Endothelial cell of umbilical vein (primary cell): ENCODE measurements at regions of chr6 and their contacts with region 1.

Region 1: DNA sequence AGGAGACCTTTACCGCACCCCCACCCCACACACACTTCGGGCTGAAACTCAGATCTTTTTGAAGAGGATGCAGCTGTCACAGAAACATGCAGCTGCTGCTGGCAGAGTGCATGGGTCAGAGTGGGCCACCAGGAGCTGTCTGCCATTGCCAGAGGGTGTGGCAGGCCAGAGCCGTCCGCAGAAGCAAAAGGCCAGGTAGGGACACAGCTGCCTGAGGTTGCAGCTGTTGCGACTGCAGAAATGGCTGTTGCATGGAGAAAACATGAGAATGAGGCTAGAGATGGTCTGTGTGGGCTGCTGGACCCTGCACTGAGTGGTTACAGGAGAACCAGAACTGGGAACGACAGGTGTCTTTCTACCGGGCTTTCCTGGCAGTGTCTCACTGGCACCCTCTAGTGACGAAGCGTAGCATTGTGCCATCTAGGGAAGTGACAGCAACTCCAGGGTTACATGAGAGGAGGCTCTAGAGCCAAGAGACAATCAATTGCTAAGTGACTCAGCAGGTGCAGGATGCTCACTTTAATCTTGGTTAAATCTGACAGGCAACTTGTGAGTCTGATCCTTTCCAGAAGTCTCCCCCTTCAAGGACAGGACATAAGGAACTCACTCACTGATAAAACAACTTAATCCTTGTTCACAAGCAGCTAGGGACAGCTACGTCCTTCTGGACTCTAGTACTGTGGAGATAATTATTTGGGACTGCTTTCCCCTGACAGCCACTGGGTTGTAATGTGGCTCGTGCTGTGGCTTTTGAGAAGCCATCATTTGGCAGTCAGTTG is 29.1 kb upstream of the SERPINB9 start:
- DNase-seq: peak; percentile 84
- H3K4me3 ChIP-seq: no peak overlapping the region
- H3K27ac ChIP-seq: no peak overlapping the region
- H3K4me1 ChIP-seq: peaks cover 2% of the 10 kb centered on the region
- H3K27me3 ChIP-seq: no peaks in the 10 kb centered on the region
- CTCF ChIP-seq: peak; percentile 93 to 96
- POLR2A ChIP-seq: no peak

Region 2: DNA sequence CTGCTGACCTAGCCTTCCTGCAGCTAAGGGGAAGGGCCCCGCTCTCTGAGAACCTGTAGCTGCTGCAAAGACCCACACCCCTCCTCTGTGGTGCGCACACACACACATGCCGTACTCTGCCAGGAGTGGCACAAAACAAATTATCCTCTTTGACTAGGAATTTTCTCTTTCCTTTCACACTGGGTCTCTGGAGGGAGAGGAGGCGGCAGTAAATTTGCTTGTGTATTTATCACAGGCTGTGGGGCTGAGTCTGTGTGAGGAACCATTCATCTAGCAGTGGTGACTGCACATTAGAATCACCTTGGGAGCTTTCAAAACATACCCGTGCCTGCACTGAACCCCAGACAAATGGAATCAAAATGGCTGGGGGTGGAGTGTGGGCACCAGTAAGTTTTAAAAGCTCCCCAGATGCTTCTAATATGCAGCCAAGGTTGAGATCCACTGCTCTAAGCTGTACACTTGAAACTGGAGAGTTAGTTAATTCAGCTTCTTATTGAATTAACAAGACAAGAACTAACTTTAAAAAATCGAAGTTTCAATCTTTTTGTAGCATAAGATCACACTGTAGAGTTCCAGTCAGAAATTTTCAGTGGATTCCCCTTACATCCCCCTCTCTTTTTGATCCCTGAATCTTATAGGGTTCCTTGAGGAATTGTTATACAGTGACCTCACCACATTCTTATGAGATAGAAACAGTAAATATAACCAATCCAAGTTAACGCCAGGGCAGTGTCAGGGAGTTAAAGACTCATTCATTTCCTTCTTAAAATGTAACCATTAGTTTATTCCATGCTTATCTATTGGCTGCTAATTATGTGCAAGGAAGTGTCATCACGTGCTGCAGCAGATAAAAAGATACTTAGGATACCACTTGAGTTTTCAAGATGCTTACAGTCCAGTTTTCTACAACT is 656.9 kb before region 1 on chr6:
- CTCF ChIA-PET with region 1: no interaction called
- POLR2A ChIA-PET with region 1: no interaction called
- dilution Hi-C with region 1: no loop called
- intact Hi-C with region 1: no loop called
- DNase-seq: no peak
- H3K4me3 ChIP-seq: no peak overlapping the region
- H3K27ac ChIP-seq: no peak overlapping the region
- H3K4me1 ChIP-seq: no peaks in the 10 kb centered on the region
- H3K27me3 ChIP-seq: no peaks in the 10 kb centered on the region
- CTCF ChIP-seq: no peak
- POLR2A ChIP-seq: no peak

Region 3: DNA sequence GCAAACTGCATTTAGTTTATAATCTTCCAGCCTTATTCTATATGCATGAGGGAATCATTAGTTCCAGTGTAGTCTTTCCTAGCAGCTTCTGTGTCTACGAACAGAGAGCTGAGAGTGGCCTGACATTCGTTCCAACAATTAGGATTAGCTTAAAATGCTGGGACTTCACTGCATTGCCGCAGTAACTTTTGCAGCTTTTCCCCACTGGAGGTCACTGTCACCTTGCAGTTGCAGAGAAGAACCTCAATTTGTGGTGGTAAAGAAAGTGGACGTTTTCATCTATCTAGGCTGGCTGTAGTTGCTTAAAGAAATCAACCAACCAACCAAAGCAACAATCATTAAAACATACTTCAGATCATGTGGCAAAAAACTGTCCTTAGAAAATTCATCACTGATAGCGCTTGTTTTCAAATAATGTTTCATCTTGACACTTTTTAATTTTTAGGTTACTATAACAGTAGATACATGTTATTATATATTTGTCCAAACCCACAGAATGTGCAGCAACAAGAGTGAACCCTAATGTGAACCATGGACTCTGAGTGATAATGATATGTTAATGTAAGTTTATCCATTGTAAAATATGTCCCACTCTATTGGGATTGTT is 193.7 kb before region 1 on chr6:
- CTCF ChIA-PET with region 1: interaction called, 14 read pairs
- POLR2A ChIA-PET with region 1: no interaction called
- dilution Hi-C with region 1: no loop called
- intact Hi-C with region 1: loop called (anchors 1 kb)
- DNase-seq: peak; percentile 72
- H3K4me3 ChIP-seq: no peak overlapping the region
- H3K27ac ChIP-seq: no peak overlapping the region
- H3K4me1 ChIP-seq: no peaks in the 10 kb centered on the region
- H3K27me3 ChIP-seq: no peaks in the 10 kb centered on the region
- CTCF ChIP-seq: peak; percentile 54 to 64
- POLR2A ChIP-seq: no peak

Region 4: DNA sequence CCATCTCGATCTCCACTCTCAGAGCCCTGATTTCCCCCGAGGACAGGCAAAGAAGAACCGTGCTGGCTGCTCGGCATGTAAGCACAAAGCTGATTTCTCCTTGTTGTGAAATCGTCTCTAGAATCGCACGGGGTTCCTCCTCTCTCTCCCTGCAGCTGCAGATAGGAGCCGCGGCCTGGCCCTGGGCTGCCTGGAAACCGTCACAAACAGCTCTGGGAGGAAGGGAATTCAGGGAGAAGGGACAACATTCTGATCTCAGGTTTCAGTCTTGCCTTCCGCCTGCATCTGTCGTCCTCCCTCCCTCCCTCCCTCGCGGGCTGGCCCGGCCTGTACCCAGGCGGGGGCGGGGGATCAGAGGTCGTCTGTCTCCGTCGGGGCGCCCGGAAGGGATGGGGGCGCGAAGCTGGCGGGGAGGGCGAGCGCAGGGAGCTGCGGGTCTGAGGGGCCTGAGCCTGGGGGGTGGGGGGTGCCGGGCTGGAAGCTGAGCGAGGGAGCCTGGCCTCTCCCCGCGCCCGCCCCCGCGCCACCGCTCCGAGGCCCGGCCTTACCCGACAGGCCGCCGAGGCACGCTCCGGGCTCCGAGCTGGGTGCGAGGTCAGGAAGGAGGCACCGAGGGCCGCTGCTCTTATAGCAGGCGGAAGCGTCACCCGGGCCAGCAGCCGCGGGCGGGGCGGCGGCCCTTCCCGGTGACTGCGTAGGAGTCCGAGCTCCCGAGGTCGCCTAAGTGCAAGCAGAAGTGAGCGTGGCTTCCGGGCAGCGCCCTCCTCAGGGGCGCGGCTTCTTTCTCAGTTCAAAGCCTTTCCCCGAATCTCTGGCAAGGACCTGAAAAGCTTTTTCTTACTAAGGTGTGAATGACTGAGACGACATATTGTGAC is 90.7 kb before region 1 on chr6 and contains the start of gene SERPINB1:
- CTCF ChIA-PET with region 1: interaction called, 185 read pairs
- POLR2A ChIA-PET with region 1: no interaction called
- dilution Hi-C with region 1: no loop called
- intact Hi-C with region 1: loop called (anchors 1 kb)
- DNase-seq: peak; percentile 88
- H3K4me3 ChIP-seq: peak within 1 kb of the TSS; percentile 33 to 44 (median 38)
- H3K27ac ChIP-seq: peak within 1 kb of the TSS; percentile 62
- H3K4me1 ChIP-seq: peaks cover 37% of the 10 kb centered on the region
- H3K27me3 ChIP-seq: no peaks in the 10 kb centered on the region
- CTCF ChIP-seq: no peak
- POLR2A ChIP-seq: no peak
- total RNA-seq, gene SERPINB1: 23.3 and 24.0 TPM in 2 replicates

Region 5: DNA sequence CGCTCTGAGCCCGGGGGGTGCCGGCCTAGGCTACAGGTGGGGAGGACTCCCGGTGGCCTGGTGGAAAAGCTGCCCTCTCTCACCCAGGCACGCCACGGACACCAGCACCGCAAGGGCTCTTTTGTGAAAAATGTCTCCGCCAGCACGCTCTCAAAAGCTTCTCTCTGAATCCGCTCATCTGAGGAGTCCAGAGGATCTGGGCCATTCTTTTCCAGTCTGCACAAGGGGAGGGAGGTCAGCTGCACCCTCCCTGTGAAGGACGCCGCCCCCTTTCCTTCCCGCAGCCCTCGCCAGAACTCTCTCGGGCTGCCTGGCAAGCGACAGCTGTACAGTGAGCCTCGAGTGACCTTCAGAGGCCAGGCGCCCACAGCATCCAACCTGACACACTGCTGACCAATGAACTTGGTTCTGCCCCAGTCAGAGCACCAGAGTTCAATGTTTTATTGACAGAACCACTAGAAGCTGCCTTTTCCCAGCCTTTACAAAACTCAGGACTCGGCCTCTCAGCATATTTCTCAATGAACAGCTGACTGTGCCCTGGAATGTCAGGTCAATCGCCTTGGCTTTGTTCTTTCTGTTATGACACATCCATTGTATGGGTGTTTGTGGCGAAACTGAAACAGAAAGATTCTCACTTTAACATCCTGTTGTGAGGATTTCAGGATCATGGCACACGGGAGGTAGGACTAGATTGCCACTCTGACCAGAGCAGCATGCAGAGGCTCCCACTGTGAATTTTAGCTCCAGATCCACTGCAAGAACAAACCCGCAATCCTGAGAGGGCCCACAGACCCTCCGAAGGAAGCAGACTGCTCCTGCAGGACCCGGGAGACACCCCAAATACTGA is 55.7 kb before region 1 on chr6:
- CTCF ChIA-PET with region 1: interaction called, 12 read pairs
- POLR2A ChIA-PET with region 1: no interaction called
- dilution Hi-C with region 1: no loop called
- intact Hi-C with region 1: no loop called
- DNase-seq: peak; percentile 98
- H3K4me3 ChIP-seq: peak overlapping the region in 2 of 3 experiments; percentile 28 to 53
- H3K27ac ChIP-seq: peak overlapping the region; percentile 91
- H3K4me1 ChIP-seq: peaks cover 29% of the 10 kb centered on the region
- H3K27me3 ChIP-seq: no peaks in the 10 kb centered on the region
- CTCF ChIP-seq: no peak
- POLR2A ChIP-seq: peak; percentile 55

Region 6: GRCh38 chr6:2917065-2917464 is 15.1 kb before region 1 on chr6:
- CTCF ChIA-PET with region 1: interaction called, 18 read pairs
- POLR2A ChIA-PET with region 1: no interaction called
- dilution Hi-C with region 1: no loop called
- intact Hi-C with region 1: no loop called
- DNase-seq: no peak
- H3K4me3 ChIP-seq: no peak overlapping the region
- H3K27ac ChIP-seq: no peak overlapping the region
- H3K4me1 ChIP-seq: no peaks in the 10 kb centered on the region
- H3K27me3 ChIP-seq: no peaks in the 10 kb centered on the region
- CTCF ChIP-seq: no peak
- POLR2A ChIP-seq: no peak